ENCODE measurements at regions of chr20 and their contacts with region 1.

Region 1: GRCh38 chr20:49338061-49338460 is 60.2 kb upstream of the ZNFX1 start:
- DNase-seq: no peak
- ATAC-seq: no peak
- H3K4me3 ChIP-seq: no peak overlapping the region
- H3K4me3 Mint-ChIP-seq: no peak overlapping the region
- H3K27ac ChIP-seq: no peak overlapping the region
- H3K27ac Mint-ChIP-seq: no peak overlapping the region
- H3K4me1 ChIP-seq: no peaks in the 10 kb centered on the region
- H3K4me1 Mint-ChIP-seq: peaks cover 0 to 4% (median 0%) of the 10 kb centered on the region in 7 donors
- H3K27me3 ChIP-seq: peaks cover 0 to 5% of the 10 kb centered on the region in 2 donors
- H3K27me3 Mint-ChIP-seq: peaks cover 3 to 12% (median 9%) of the 10 kb centered on the region in 5 donors

Region 2: DNA sequence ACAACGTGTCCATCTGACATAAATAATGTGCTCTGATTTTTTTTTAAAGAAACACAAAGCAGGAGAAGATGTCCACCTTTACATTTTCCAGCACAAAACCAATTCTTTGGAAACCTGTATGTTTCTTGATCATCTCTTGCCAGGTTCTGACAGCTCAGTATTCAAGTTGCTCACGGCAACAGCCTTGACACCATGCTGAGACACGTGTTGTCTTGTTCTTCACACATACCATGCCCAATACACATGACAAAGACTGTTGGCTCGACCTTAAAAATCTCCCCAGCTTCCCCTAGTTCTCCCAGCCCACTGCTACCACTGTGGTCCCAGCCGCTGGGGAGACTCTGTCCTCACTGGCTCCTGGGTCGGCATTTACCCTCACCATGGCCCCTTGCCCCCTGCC is 1029.2 kb before region 1 on chr20:
- CTCF ChIA-PET with region 1: no interaction called
- POLR2A ChIA-PET with region 1: no interaction called
- intact Hi-C with region 1: no loop called
- DNase-seq: no peak
- ATAC-seq: no peak
- H3K4me3 ChIP-seq: no peak overlapping the region
- H3K4me3 Mint-ChIP-seq: no peak overlapping the region
- H3K27ac ChIP-seq: no peak overlapping the region
- H3K27ac Mint-ChIP-seq: no peak overlapping the region
- H3K4me1 ChIP-seq: no peaks in the 10 kb centered on the region
- H3K4me1 Mint-ChIP-seq: no peaks in the 10 kb centered on the region
- H3K27me3 ChIP-seq: no peaks in the 10 kb centered on the region
- H3K27me3 Mint-ChIP-seq: peaks cover 0 to 17% (median 11%) of the 10 kb centered on the region in 5 donors

Region 3: GRCh38 chr20:48538420-48539203 is 799.4 kb before region 1 on chr20:
- CTCF ChIA-PET with region 1: no interaction called
- POLR2A ChIA-PET with region 1: no interaction called
- intact Hi-C with region 1: no loop called
- DNase-seq: no peak
- ATAC-seq: no peak
- H3K4me3 ChIP-seq: no peak overlapping the region
- H3K4me3 Mint-ChIP-seq: no peak overlapping the region
- H3K27ac ChIP-seq: no peak overlapping the region
- H3K27ac Mint-ChIP-seq: no peak overlapping the region
- H3K4me1 ChIP-seq: no peaks in the 10 kb centered on the region
- H3K4me1 Mint-ChIP-seq: no peaks in the 10 kb centered on the region
- H3K27me3 ChIP-seq: no peaks in the 10 kb centered on the region
- H3K27me3 Mint-ChIP-seq: peaks cover 12 to 26% (median 14%) of the 10 kb centered on the region in 5 donors

Region 4: GRCh38 chr20:49508435-49509199 is 170.6 kb after region 1 on chr20:
- CTCF ChIA-PET with region 1: no interaction called
- POLR2A ChIA-PET with region 1: no interaction called
- intact Hi-C with region 1: loop called (anchors 1 kb)
- DNase-seq: peak in 3 of 9 donors; percentile 6 to 22 (median 10)
- ATAC-seq: no peak
- H3K4me3 ChIP-seq: no peak overlapping the region
- H3K4me3 Mint-ChIP-seq: no peak overlapping the region
- H3K27ac ChIP-seq: no peak overlapping the region
- H3K27ac Mint-ChIP-seq: no peak overlapping the region
- H3K4me1 ChIP-seq: no peaks in the 10 kb centered on the region
- H3K4me1 Mint-ChIP-seq: peaks cover 0 to 5% (median 0%) of the 10 kb centered on the region in 7 donors
- H3K27me3 ChIP-seq: no peaks in the 10 kb centered on the region
- H3K27me3 Mint-ChIP-seq: peaks cover 18 to 45% (median 40%) of the 10 kb centered on the region in 5 donors